GM10248 (cell line): ENCODE measurements at regions of chr4 and their contacts with region 1.

Region 1: DNA sequence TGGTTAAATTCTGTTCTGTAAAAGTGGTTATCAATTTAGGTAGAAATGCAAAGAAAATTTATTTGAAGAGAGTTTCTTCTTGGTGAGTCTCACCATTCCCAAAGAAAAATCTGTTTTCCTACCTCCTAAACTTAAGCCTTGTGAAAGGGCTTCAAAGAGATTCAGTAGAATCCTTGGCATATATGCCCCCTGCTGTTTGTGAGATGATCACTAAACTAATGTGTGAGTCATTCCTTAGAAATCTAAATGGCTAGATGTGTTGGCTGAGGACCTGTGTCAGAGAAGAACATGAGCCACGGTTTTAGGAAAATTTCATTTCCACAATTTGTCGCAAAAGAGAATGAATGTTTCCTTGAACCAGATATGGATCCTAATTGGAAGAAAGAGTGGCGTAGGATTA is 260.9 kb downstream of the SLC7A11 start:
- DNase-seq: no peak
- CTCF ChIP-seq: no peak

Region 2: DNA sequence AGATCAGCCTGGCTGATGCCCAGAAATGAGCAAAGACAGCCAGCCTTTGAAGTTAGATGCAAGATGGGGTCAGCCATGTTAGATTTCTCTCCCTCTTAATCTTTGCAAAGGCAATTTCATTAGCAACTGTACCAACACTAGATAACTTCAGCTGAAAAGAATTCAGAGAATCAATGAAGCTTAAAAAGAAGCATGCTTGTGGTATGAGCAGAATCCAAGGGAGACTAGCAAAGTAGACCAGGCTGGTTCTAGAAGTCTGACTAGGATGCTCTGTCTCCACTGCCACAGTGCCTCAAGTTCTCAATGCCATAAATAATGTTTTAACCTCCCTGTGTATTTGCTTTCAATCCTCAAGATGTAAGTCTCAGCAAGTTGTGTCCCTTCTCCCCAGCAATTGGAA is 13.6 kb after region 1 on chr4:
- CTCF ChIA-PET with region 1: interaction called, 10 read pairs
- POLR2A ChIA-PET with region 1: no interaction called
- DNase-seq: no peak
- CTCF ChIP-seq: no peak

Region 3: DNA sequence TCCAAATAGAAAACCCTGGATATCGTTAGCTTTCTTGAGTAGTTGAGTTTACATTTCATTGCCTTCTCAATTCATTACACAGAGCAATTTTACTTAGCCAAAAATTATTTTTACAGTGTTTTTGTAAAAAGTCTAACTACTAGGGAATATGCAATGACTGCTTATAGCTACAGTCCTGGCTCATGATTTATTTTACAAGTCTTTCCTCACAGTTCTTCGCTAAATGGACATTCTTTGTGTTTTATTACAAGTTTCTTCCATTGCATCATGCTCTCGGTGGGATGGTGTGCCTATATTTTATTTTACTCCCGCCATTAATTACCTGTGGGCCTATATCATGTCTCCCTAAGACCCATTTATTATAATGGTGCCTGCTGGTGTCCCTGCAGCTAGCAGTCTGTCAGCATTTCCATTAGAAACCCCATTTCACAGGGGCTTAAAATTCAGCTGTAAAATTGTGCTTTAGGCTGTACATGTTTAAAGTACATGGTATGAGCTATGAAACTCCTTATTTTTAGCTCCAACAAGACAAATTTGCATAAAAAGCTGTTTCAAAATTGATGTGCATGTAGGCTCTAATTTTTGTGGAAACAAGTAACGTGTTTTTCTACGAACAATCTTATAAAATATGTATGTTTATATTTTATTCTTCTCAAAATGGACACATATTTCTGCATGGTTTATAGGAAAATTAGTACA is 33.5 kb after region 1 on chr4:
- CTCF ChIA-PET with region 1: no interaction called
- POLR2A ChIA-PET with region 1: no interaction called
- DNase-seq: no peak
- CTCF ChIP-seq: no peak